ENCODE measurements at regions of chr17 and their contacts with region 1.

Region 1: DNA sequence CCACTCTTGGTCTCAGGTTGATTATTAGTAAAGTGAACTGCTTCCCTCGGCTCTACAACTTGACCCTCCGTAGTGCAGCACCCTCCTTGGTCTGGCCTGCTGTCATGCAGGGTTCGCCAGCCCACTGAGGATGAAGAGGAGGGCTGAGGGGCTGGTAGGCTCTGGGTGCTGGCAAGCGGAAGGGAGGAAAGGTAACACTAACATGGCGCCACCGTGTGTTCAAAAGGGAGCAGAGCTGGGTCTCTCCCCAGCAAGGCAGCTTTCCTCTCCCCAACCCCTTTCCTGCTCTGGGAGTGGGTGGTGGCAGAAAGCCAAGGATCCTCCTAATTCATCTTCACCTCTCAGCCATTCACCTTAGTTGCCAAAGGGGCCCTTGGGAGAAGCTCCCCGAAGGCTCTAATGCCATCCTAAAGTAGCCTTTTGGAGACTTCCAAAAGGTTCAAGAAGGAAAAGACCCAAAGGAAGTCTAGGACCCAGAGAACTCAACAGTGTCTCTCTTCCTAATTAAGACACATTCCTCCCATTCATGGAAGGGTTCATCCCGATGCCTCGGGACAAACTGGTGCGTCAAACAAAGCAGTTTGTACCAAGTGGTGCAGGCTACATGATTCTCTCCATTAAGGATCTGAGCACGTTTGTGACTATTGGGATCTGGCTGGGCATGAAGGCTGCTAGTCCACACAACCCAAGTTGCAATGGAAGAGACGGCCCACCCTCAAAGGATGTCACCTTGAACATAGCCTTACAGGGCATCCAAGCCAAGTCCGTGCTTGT is 90.8 kb upstream of the TOB1 start:
- DNase-seq: peak in 1 of 2 donors; percentile 76
- ATAC-seq: peak in 1 of 2 donors; percentile 35
- H3K4me3 ChIP-seq: no peak overlapping the region
- H3K27ac ChIP-seq: peak overlapping the region; percentile 98 to 100 (median 100)
- H3K4me1 ChIP-seq: peaks cover 37 to 42% of the 10 kb centered on the region in 2 donors
- H3K27me3 ChIP-seq: no peaks in the 10 kb centered on the region
- CTCF ChIP-seq: peak; percentile 65 to 82 (median 78)
- POLR2A ChIP-seq: no peak

Region 2: DNA sequence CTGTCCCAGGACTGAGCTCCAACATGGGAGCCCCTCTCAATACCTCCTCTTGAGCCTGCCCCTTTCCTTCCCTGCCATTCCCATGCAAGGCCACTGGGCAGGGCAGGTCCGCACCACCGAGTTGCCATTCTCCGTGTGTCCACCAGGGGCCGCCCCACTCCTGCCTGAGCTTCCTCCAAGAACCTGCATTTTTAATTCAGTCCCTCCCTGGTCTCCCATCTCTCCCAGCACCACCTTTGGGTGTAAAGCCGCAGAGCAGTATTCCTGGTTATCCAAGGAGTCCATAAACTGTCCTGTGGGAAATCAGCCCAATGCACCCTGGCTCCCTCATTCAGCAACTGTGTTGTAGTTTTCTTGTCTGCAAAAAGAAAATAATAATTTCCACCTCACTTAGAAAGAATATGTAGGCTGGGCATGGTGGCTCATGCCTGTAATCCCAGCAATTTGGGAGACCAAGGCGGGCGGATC is 173.7 kb before region 1 on chr17:
- in situ Hi-C with region 1: loop called in 2 of 4 experiments (anchors 5 to 10 kb)
- intact Hi-C with region 1: loop called (anchors 2 kb)
- DNase-seq: peak; percentile 62 to 76
- ATAC-seq: peak; percentile 73 to 92
- H3K4me3 ChIP-seq: no peak overlapping the region
- H3K27ac ChIP-seq: no peak overlapping the region
- H3K4me1 ChIP-seq: no peaks in the 10 kb centered on the region
- H3K27me3 ChIP-seq: no peaks in the 10 kb centered on the region
- CTCF ChIP-seq: peak; percentile 95 to 99 (median 97)
- POLR2A ChIP-seq: no peak

Region 3: DNA sequence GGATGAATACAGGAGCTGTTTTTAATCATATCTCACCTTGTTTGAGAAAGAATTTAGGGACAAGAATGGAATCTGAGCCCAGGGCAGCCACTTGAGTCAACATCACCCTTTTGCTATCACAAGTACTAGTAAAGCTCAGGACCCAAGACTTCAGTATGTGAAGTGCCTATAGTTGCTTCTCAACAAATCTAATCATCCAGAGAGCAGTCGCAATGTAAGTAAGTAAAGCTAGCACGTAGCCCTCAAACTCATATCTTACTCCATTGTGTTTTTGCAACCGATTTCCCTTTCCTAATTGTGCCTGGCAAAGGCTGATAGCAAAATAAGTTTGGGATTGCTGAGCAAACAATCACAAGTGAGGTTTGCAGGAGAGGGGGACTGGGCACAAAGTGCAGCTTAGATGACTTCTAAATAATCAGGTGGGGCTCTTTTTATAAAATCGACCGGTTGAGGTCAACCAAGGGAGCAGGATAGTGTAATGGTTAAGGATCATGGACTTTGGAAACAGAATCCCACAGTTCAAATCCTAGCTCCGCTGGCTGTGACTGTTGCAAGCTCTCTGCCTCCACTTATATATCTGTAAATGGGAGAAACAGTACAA is 103.8 kb before region 1 on chr17:
- in situ Hi-C with region 1: loop called in 1 of 4 experiments (anchors 5 kb)
- intact Hi-C with region 1: no loop called
- DNase-seq: no peak
- ATAC-seq: no peak
- H3K4me3 ChIP-seq: no peak overlapping the region
- H3K27ac ChIP-seq: peak overlapping the region; percentile 88 to 95 (median 93)
- H3K4me1 ChIP-seq: peaks cover 25 to 51% of the 10 kb centered on the region in 2 donors
- H3K27me3 ChIP-seq: no peaks in the 10 kb centered on the region
- CTCF ChIP-seq: no peak
- POLR2A ChIP-seq: no peak

Region 4: GRCh38 chr17:50904521-50905459 is 52.1 kb before region 1 on chr17:
- in situ Hi-C with region 1: no loop called
- intact Hi-C with region 1: no loop called
- DNase-seq: peak; percentile 9 to 46
- ATAC-seq: peak; percentile 54 to 59
- H3K4me3 ChIP-seq: peak overlapping the region in 3 of 4 donors; percentile 13 to 36 (median 22)
- H3K27ac ChIP-seq: peak overlapping the region; percentile 90 to 98 (median 94)
- H3K4me1 ChIP-seq: peaks cover 30 to 35% of the 10 kb centered on the region in 2 donors
- H3K27me3 ChIP-seq: no peaks in the 10 kb centered on the region
- CTCF ChIP-seq: no peak
- POLR2A ChIP-seq: peak in 1 of 2 donors; percentile 14

Region 5: DNA sequence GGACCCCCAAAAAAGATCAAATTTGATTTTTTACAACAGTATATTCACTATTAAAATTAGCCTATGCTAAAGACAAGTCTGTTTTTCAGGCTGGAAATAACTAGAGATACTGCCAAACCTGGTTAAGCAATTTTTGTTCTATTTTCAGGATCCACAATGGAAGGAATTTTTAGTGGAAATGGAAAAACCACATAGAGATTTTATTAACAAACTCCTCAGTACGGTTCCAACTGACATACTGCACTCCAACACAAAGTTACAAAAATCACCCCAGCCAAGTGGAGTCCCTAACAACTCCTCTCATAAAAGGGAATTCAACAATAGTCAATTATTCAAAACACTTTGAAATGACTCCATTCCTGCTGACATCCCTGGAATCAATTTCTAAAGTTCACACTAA is 10.9 kb after region 1 on chr17:
- in situ Hi-C with region 1: no loop called
- intact Hi-C with region 1: no loop called
- DNase-seq: no peak
- ATAC-seq: no peak
- H3K4me3 ChIP-seq: no peak overlapping the region
- H3K27ac ChIP-seq: peak overlapping the region; percentile 1 to 48 (median 38)
- H3K4me1 ChIP-seq: peaks cover 0 to 13% of the 10 kb centered on the region in 2 donors
- H3K27me3 ChIP-seq: no peaks in the 10 kb centered on the region
- CTCF ChIP-seq: no peak
- POLR2A ChIP-seq: no peak

Region 6: GRCh38 chr17:51016099-51016498 is 59.2 kb after region 1 on chr17:
- in situ Hi-C with region 1: no loop called
- intact Hi-C with region 1: no loop called
- DNase-seq: no peak
- ATAC-seq: no peak
- H3K4me3 ChIP-seq: no peak overlapping the region
- H3K27ac ChIP-seq: no peak overlapping the region
- H3K4me1 ChIP-seq: peaks cover 7 to 8% of the 10 kb centered on the region in 2 donors
- H3K27me3 ChIP-seq: no peaks in the 10 kb centered on the region
- CTCF ChIP-seq: no peak
- POLR2A ChIP-seq: no peak

Measured in gastrocnemius medialis (tissue), 4 donors.